Cardiac septum (tissue), 1 donor: ENCODE measurements at regions of chr14 and their contacts with region 1.

Region 1: GRCh38 chr14:94110552-94111181 is at the start of gene IFI27:
- DNase-seq: no peak
- total RNA-seq, gene IFI27: 147 TPM

Region 2: DNA sequence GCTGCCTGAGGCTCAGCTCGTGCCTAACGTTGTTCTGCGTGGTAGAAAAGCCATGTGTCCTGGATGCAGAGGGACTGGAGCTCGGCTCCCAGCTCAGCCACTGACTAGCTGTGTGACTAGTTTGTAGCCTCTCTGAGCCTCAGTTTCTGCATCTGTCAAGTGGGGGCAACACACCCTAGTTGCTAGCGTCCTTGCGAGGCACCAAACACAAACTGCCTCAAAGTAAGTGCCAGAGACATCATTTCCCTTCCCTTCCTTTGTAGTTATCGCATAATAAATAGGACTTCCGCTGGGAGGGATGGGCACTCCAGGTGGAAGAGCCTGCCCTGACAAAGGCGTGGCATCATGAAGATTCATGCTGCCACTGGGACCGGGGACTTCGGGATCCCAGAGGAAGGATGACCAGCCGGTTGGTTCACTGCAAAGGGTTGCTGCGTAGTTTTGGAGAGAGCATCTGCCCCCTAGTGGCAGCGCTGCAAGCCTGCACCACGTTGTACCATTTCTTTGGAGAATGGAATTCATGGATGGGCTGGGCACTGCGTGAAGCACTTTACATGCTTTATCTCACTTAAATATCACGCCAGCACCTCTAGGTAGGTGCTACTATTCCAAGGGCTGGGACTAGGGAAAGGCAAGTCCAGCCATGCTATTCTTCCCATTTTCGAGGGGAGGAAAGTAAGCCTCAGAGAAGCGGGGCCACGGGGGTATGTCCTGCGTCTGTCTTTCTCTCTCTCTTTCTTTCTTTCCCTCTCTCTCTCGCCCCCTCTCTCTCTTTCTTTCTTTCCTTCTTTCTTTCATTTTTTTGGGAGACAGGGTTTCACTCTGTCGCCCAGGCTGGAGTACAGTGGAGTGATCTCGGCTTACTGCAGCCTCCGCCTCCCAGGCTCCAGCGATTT is 108.9 kb before region 1 on chr14:
- intact Hi-C with region 1: no loop called
- DNase-seq: no peak

Region 3: GRCh38 chr14:94011795-94012194 is 98.9 kb before region 1 on chr14:
- intact Hi-C with region 1: no loop called
- DNase-seq: no peak

Region 4: DNA sequence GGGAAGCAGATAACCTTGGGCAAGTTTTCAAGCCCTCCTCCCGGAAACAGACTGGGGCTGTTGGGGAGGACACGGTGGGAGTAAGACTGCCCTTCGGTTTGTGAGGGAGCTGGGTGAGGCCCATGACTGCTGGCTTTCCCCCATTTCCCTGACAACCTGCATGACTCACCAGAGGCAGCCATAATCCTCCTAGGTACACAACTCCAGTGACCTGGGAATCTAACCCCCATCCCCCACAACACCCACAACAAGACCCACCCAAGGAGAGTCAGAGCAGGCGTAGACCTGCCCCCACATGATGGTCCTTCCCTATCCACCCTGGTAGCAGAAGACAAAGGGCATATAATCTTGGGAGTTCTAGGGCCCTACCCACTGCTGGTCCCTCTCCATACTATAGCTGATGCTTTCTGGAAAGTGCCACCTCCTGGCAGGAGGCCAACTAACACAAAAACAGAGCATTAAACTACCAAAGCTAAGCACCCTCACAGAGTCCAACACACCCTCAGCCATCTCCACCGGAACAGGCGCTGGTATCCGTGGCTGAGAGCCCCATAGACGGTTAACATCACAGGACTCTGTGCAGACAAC is 44.5 kb before region 1 on chr14:
- intact Hi-C with region 1: loop called (anchors 5 kb)
- DNase-seq: no peak

Region 5: GRCh38 chr14:94129111-94129757 is 18.6 kb after region 1 on chr14 and contains the start of gene IFI27L2:
- intact Hi-C with region 1: loop called (anchors 2 kb)
- DNase-seq: peak; percentile 88
- total RNA-seq, gene IFI27L2: 93.0 TPM